ENCODE measurements at regions of chr6 and their contacts with region 1.

Region 1: GRCh38 chr6:11653028-11653583 is 115.6 kb downstream of the TMEM170B start:
- DNase-seq: peak; percentile 76
- H3K4me3 Mint-ChIP-seq: no peak overlapping the region
- H3K27ac Mint-ChIP-seq: no peak overlapping the region
- H3K4me1 Mint-ChIP-seq: peaks cover 12% of the 10 kb centered on the region
- H3K27me3 Mint-ChIP-seq: no peaks in the 10 kb centered on the region

Region 2: GRCh38 chr6:11700118-11700718 is 47.1 kb after region 1 on chr6:
- CTCF ChIA-PET with region 1: interaction called, 7 read pairs
- intact Hi-C with region 1: loop called (anchors 5 kb)
- DNase-seq: no peak
- H3K4me3 Mint-ChIP-seq: no peak overlapping the region
- H3K27ac Mint-ChIP-seq: no peak overlapping the region
- H3K4me1 Mint-ChIP-seq: peaks cover 28% of the 10 kb centered on the region
- H3K27me3 Mint-ChIP-seq: no peaks in the 10 kb centered on the region

Region 3: DNA sequence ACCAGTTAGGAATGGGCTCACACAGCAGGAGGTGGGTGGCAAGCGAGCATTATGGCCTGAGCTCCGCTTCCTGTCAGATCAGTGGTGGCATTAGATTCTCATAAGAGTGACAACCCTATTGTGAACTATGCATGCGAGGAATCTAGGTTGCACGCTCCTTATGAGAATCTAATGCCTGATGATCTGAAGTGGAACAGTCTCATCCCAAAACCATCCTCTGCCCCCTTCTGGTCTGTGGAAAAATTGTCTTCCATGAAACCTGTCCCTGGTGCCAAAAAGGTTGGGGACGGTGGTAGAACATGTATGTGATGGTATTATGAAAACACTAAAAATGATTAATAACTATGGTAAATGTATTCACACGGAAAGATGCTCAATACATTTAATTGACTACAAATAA is 259.3 kb after region 1 on chr6:
- CTCF ChIA-PET with region 1: interaction called, 3 read pairs
- intact Hi-C with region 1: loop called (anchors 1 kb)
- DNase-seq: peak; percentile 35
- H3K4me3 Mint-ChIP-seq: no peak overlapping the region
- H3K27ac Mint-ChIP-seq: no peak overlapping the region
- H3K4me1 Mint-ChIP-seq: peaks cover 2% of the 10 kb centered on the region
- H3K27me3 Mint-ChIP-seq: no peaks in the 10 kb centered on the region

Region 4: GRCh38 chr6:12075067-12075563 is 422.0 kb after region 1 on chr6:
- CTCF ChIA-PET with region 1: interaction called, 5 read pairs
- intact Hi-C with region 1: loop called (anchors 1 kb)
- DNase-seq: peak; percentile 56
- H3K4me3 Mint-ChIP-seq: no peak overlapping the region
- H3K27ac Mint-ChIP-seq: no peak overlapping the region
- H3K4me1 Mint-ChIP-seq: peaks cover 59% of the 10 kb centered on the region
- H3K27me3 Mint-ChIP-seq: no peaks in the 10 kb centered on the region

Region 5: GRCh38 chr6:12504319-12504966 is 851.3 kb after region 1 on chr6:
- CTCF ChIA-PET with region 1: no interaction called
- intact Hi-C with region 1: loop called (anchors 5 kb)
- DNase-seq: peak; percentile 22
- H3K4me3 Mint-ChIP-seq: no peak overlapping the region
- H3K27ac Mint-ChIP-seq: no peak overlapping the region
- H3K4me1 Mint-ChIP-seq: peaks cover 3% of the 10 kb centered on the region
- H3K27me3 Mint-ChIP-seq: peaks cover 3% of the 10 kb centered on the region